Activated B cell treated with CpG ODN at 0.5 μM for 24 hours (primary cell): ENCODE measurements at regions of chr22 and their contacts with region 1.

Region 1: GRCh38 chr22:23849009-23850006 is 8.4 kb upstream of the SLC2A11 start:
- DNase-seq: peak; percentile 95
- ATAC-seq: peak; percentile 78
- H3K4me3 Mint-ChIP-seq: peak overlapping the region; percentile 70
- H3K27ac Mint-ChIP-seq: no peak overlapping the region
- H3K4me1 Mint-ChIP-seq: peaks cover 69% of the 10 kb centered on the region
- H3K27me3 Mint-ChIP-seq: no peaks in the 10 kb centered on the region
- CTCF ChIP-seq: peak; percentile 60

Region 2: DNA sequence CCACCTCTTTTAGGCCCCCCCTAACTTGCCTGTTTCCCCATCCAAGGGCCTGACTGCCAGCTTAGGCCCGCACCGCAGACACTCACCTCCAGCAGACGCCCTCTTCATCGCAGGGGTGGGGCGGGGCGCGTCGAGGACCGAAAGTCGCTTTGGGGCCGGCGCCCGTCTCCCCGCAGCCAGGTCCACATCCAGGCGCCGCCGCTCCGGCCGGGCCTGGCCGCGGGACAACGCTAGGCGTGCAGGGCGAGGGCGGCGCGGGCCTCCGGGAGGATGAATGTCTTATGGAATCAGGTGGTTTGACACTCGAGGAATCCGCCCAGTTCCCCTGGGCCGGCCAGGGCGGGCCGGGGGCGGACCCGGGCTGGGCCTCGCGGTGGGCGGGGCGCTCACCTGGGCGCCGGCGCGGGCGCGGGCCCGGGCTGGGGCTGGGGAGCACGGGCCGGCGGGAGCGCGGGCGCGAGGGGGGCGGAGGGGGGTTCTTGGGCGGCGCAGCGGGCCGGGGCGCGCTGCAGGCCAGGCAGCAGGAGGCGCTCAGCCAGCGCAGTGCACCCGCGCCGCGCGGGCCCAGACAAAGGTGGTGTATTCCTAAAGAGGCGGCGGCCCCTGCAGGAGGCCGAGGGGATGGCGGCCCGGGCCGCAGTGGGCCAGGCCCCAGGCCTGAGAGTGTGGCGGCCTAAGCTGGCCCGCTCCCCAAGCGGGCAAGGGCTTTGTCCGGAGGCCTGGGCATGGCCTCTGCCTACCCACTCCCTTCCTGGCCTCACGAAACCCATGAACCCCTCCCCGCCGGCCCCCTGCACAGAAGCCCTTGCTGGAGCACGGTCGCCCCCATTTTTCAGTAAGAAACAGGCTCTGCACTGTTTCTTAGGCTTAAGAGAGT is 446.8 kb before region 1 on chr22:
- CTCF ChIA-PET with region 1: no interaction called
- POLR2A ChIA-PET with region 1: no interaction called
- intact Hi-C with region 1: loop called (anchors 10 kb)
- DNase-seq: peak; percentile 55
- ATAC-seq: peak; percentile 96
- H3K4me3 Mint-ChIP-seq: peak overlapping the region; percentile 58
- H3K27ac Mint-ChIP-seq: no peak overlapping the region
- H3K4me1 Mint-ChIP-seq: no peaks in the 10 kb centered on the region
- H3K27me3 Mint-ChIP-seq: no peaks in the 10 kb centered on the region
- CTCF ChIP-seq: no peak

Region 3: DNA sequence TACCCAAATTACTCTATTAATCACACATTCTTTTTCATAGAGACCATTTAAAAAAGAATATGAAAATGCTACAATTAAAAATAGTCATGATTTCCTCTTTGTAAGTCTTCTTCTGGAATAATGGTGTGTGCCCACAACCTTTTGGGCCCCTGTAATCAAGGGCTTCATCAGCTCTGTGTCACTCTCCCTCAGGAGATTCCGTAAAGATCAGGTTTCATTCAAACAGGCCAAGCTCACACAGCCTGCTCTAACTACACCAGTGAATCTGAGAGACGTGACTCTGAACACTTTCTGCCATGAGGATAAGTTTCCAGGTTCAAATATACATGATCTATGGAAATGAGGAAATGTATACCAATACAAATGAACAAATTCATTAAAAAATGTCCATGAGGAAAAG is 226.7 kb before region 1 on chr22:
- CTCF ChIA-PET with region 1: interaction called, 7 read pairs
- POLR2A ChIA-PET with region 1: no interaction called
- intact Hi-C with region 1: loop called (anchors 5 kb)
- DNase-seq: no peak
- ATAC-seq: no peak
- H3K4me3 Mint-ChIP-seq: no peak overlapping the region
- H3K27ac Mint-ChIP-seq: no peak overlapping the region
- H3K4me1 Mint-ChIP-seq: peaks cover 3% of the 10 kb centered on the region
- H3K27me3 Mint-ChIP-seq: no peaks in the 10 kb centered on the region
- CTCF ChIP-seq: no peak

Region 4: DNA sequence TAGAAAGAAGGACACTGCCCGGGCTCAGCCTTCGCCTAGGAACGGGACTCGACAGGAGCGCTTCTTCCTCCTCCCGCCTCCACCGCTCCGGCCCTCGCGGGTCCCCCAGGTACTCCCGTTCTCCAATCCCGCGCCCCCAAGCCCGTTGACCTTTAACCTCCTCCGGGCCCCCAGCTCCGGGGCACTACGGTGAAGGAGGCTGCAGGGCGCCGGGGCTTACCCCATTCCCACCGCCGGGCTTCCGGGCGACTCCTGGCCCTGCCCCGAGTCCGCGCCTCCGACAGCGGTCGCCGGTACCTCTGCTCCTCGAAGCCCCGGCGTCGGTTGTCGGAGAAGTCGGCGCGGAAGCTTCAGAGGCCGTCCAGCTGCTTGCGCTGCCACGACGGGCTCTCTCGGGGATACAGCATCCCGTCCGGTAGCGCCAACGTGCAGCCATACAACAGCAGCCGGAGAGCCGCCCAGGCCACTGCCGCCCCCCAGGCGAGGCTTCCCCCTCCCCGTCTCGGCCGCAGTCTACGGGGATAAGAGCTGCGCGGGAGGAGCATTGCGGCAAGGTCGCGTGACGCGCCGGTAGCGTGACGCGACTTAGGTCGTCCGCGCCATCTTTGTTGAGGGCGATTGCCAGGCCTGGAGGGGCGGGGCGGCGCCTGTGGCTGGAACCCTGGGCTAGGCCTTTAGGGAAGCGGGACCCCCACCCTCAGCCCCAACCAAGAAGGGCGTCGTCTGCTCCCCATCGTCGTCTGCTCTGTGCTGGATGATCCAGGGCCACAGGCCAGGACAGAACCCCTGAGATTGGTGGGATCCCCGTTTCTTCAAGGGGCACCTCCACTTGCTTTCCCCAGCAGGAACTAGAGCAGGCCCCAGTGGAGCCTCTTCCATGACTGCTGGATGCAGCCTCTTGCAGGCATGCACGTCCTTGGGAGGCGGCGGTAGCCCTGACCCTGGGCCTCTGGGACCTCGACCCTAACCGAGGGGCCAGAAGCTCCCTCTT is 132.2 kb before region 1 on chr22:
- CTCF ChIA-PET with region 1: interaction called, 3 read pairs
- POLR2A ChIA-PET with region 1: interaction called, 4 read pairs
- intact Hi-C with region 1: loop called (anchors 5 kb)
- DNase-seq: peak; percentile 81
- ATAC-seq: peak; percentile 97
- H3K4me3 Mint-ChIP-seq: peak overlapping the region; percentile 81
- H3K27ac Mint-ChIP-seq: peak overlapping the region; percentile 69
- H3K4me1 Mint-ChIP-seq: peaks cover 16% of the 10 kb centered on the region
- H3K27me3 Mint-ChIP-seq: no peaks in the 10 kb centered on the region
- CTCF ChIP-seq: no peak

Region 5: DNA sequence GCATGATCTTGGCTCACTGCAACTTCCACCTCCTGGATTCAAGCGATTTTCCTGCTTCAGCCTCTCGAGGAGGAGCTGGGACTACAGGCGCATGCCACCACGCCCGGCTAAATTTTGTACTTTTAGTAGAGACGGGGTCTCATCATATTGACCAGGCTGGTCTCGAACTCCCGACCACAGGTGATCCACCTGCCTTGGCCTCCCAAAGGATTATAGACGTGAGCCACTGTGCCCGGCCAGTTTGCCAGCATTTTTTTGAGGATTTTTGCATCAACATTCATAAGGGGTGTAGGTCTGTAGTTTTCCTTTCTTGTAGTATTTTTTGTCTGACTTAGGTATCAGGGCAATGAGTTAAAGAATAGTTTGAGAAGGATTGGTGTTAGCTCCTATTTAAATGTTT is 29.4 kb before region 1 on chr22:
- CTCF ChIA-PET with region 1: no interaction called
- POLR2A ChIA-PET with region 1: no interaction called
- intact Hi-C with region 1: no loop called
- DNase-seq: no peak
- ATAC-seq: no peak
- H3K4me3 Mint-ChIP-seq: no peak overlapping the region
- H3K27ac Mint-ChIP-seq: peak overlapping the region; percentile 83
- H3K4me1 Mint-ChIP-seq: peaks cover 57% of the 10 kb centered on the region
- H3K27me3 Mint-ChIP-seq: no peaks in the 10 kb centered on the region
- CTCF ChIP-seq: no peak

Region 6: GRCh38 chr22:23838681-23839468 is 10.4 kb before region 1 on chr22 and contains the start of gene DERL3:
- CTCF ChIA-PET with region 1: interaction called, 7 read pairs
- POLR2A ChIA-PET with region 1: interaction called, 17 read pairs
- intact Hi-C with region 1: no loop called
- DNase-seq: peak; percentile 95
- ATAC-seq: peak; percentile 82
- H3K4me3 Mint-ChIP-seq: peak within 1 kb of the TSS; percentile 88
- H3K27ac Mint-ChIP-seq: peak within 1 kb of the TSS; percentile 95
- H3K4me1 Mint-ChIP-seq: peaks cover 75% of the 10 kb centered on the region
- H3K27me3 Mint-ChIP-seq: no peaks in the 10 kb centered on the region
- CTCF ChIP-seq: no peak
- total RNA-seq, gene DERL3: 15.4 and 18.3 TPM in 2 replicates

Region 7: GRCh38 chr22:24379536-24379935 is 530.2 kb after region 1 on chr22:
- CTCF ChIA-PET with region 1: no interaction called
- POLR2A ChIA-PET with region 1: interaction called, 11 read pairs
- intact Hi-C with region 1: no loop called
- DNase-seq: no peak
- ATAC-seq: no peak
- H3K4me3 Mint-ChIP-seq: no peak overlapping the region
- H3K27ac Mint-ChIP-seq: no peak overlapping the region
- H3K4me1 Mint-ChIP-seq: no peaks in the 10 kb centered on the region
- H3K27me3 Mint-ChIP-seq: no peaks in the 10 kb centered on the region
- CTCF ChIP-seq: no peak